Astrocyte of the cerebellum (primary cell): ENCODE measurements at regions of chr1 and their contacts with region 1.

Region 1: DNA sequence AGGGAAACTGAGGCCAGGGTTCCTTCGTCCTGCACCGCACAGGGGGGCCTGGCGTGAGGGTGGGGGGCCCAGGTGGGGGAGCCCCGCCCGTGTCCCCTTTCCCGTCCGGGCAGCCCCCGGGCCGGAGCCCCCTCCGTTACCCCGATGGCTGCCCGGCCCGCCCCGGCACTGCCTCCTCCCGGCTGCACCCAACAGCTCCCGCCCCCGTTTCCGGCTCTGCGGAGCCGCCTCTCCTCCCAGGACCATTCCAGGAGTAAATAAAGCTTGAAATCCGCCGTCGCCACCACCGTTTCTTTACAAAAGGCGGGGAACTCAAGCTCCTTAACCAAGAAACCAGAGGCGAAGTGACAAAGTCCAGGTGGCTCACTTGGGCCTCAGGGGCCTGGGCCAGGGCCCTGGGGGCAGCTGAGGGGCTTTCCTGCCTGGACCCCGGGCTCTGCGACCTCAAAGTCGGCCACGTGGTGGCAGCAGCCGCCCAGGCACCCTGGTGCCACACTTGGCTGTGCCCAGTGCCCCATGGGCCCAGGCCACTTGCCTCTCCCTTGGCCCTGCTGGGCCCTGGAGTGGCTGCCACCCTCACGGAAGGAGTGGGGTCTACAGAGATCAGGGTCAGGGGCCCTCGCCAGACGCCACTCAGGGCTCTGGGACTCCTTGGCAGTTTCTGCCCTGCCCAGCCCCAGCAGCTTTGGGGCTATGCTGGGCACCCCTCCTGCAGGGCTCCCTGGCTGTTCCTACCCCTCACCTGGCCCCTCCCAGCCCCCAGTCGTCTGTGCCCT is 514 bp upstream of the FAAP20 start:
- DNase-seq: no peak
- H3K4me3 ChIP-seq: peak overlapping the region; percentile 51
- CTCF ChIP-seq: peak; percentile 86

Region 2: GRCh38 chr1:2279210-2279639 is 84.1 kb after region 1 on chr1:
- in situ Hi-C with region 1: loop called (anchors 10 kb)
- DNase-seq: peak; percentile 92
- H3K4me3 ChIP-seq: no peak overlapping the region
- CTCF ChIP-seq: no peak

Region 3: GRCh38 chr1:2300851-2301606 is 105.9 kb after region 1 on chr1:
- in situ Hi-C with region 1: loop called (anchors 5 kb)
- DNase-seq: no peak
- H3K4me3 ChIP-seq: no peak overlapping the region
- CTCF ChIP-seq: no peak

Region 4: GRCh38 chr1:2345223-2346080 is 150.4 kb after region 1 on chr1:
- in situ Hi-C with region 1: loop called (anchors 5 kb)
- DNase-seq: no peak
- H3K4me3 ChIP-seq: no peak overlapping the region
- CTCF ChIP-seq: no peak

Region 5: GRCh38 chr1:2399890-2400575 is 204.9 kb after region 1 on chr1:
- in situ Hi-C with region 1: loop called (anchors 5 kb)
- DNase-seq: no peak
- H3K4me3 ChIP-seq: no peak overlapping the region
- CTCF ChIP-seq: no peak

Region 6: GRCh38 chr1:3423245-3423829 is 1228.3 kb after region 1 on chr1:
- in situ Hi-C with region 1: loop called (anchors 10 kb)
- DNase-seq: no peak
- H3K4me3 ChIP-seq: no peak overlapping the region
- CTCF ChIP-seq: no peak